ENCODE measurements at regions of chr19 and their contacts with region 1.

Region 1: GRCh38 chr19:47514869-47515588 is at the start of gene NAPA:
- DNase-seq: peak; percentile 100
- H3K27ac ChIP-seq: peak within 1 kb of the TSS; percentile 96
- CTCF ChIP-seq: no peak

Region 2: GRCh38 chr19:47436712-47437401 is 78.2 kb before region 1 on chr19:
- CTCF ChIA-PET with region 1: interaction called, 13 read pairs
- POLR2A ChIA-PET with region 1: no interaction called
- DNase-seq: peak; percentile 68
- H3K27ac ChIP-seq: no peak overlapping the region
- CTCF ChIP-seq: peak; percentile 87

Region 3: GRCh38 chr19:47587295-47587694 is 72.3 kb after region 1 on chr19:
- CTCF ChIA-PET with region 1: no interaction called
- POLR2A ChIA-PET with region 1: no interaction called
- DNase-seq: peak; percentile 30
- H3K27ac ChIP-seq: no peak overlapping the region
- CTCF ChIP-seq: no peak

Region 4: GRCh38 chr19:47608969-47609905 is 94.2 kb after region 1 on chr19 and contains the start of gene BICRA:
- CTCF ChIA-PET with region 1: interaction called, 11 read pairs
- POLR2A ChIA-PET with region 1: interaction called, 3 read pairs
- DNase-seq: peak; percentile 82
- H3K27ac ChIP-seq: peak within 1 kb of the TSS; percentile 91
- CTCF ChIP-seq: no peak

Region 5: DNA sequence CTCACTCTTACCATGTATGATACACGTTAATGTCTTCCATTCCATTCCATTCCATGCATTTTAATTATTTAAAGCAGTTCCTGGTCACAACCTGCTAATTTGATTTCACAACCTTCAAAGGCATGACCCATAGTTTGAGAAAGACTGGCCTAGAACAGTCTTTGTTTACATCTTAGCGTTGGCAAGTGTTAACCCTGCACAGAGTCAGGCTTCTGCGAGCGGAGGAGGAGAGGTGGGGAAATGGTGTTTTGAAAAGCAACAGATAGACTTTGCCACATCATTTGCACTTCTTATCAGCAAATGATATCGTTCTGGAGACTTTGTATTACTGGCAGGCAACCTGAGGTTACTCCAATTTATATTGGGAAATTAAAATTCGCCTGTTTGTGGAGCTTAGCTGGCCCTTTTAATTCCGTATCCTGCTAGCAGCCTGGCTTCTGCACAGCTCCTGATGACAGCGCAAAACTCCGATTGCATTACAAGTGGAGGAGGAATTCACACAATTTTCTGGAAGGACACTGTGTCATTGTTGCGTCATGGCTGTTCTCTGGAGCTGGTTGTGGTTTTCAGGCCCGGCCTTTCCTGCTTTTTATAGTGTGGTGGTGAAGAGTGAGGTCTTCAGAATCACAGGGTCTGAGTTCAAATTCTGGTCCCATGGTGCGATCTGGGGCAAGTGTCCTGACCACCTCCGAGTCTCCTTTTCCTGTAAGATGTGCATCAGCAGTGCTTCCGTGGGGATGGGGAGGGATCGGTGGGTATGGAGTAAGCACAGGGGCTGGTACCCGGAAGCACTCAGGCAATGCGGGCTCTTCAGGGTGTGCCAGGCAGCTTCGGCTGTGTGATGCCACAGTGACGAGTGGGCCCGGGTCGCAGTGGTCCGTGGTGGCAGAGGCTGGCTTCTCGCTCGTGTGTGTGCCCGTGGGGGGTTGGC is 149.1 kb after region 1 on chr19:
- CTCF ChIA-PET with region 1: interaction called, 10 read pairs
- POLR2A ChIA-PET with region 1: no interaction called
- DNase-seq: peak; percentile 74
- H3K27ac ChIP-seq: peak overlapping the region; percentile 98
- CTCF ChIP-seq: no peak

Region 6: GRCh38 chr19:47848823-47849473 is 333.9 kb after region 1 on chr19:
- CTCF ChIA-PET with region 1: interaction called, 10 read pairs
- POLR2A ChIA-PET with region 1: no interaction called
- DNase-seq: no peak
- H3K27ac ChIP-seq: no peak overlapping the region
- CTCF ChIP-seq: peak; percentile 44

Measured in RWPE1 (cell line).